ENCODE measurements at regions of chr2 and their contacts with region 1.

Region 1: DNA sequence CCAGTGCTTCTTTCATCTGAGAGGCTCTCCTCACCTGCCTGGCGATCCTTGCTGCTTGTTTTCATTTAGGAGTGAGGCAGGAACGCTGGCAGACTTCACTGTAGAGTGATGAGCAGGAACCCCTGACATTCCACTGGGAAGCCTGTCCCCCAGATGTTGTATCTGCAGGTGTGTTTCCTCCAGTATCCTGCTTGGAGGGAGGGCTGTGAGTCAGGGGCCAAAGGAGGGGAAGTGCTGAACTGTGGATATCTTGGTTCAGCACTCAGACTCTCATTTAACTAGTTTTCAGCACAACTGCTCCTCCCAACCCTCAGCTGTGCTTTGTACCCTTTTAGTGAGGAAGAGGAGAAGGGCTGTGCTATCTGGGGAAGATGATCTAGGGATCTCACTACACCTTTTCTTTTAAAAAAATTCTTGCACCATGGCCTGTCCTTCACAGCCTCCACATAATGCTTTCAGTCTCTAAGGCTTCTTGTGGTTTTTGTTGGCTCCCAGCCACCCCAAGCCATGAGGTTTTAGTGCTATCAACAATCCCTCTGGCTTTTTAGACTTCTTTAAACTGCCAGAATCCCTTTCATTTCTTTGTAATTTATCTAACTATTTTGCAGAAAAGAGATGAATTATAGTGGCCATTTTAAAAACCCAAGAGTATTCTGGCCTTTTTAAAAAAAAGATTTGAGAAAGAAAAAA is 11.2 kb downstream of the ANKAR start:
- DNase-seq: peak; percentile 47
- ATAC-seq: no peak
- H3K4me3 Mint-ChIP-seq: no peak overlapping the region
- H3K27ac Mint-ChIP-seq: no peak overlapping the region
- H3K4me1 Mint-ChIP-seq: peaks cover 33% of the 10 kb centered on the region
- H3K27me3 Mint-ChIP-seq: no peaks in the 10 kb centered on the region
- CTCF ChIP-seq: no peak

Region 2: DNA sequence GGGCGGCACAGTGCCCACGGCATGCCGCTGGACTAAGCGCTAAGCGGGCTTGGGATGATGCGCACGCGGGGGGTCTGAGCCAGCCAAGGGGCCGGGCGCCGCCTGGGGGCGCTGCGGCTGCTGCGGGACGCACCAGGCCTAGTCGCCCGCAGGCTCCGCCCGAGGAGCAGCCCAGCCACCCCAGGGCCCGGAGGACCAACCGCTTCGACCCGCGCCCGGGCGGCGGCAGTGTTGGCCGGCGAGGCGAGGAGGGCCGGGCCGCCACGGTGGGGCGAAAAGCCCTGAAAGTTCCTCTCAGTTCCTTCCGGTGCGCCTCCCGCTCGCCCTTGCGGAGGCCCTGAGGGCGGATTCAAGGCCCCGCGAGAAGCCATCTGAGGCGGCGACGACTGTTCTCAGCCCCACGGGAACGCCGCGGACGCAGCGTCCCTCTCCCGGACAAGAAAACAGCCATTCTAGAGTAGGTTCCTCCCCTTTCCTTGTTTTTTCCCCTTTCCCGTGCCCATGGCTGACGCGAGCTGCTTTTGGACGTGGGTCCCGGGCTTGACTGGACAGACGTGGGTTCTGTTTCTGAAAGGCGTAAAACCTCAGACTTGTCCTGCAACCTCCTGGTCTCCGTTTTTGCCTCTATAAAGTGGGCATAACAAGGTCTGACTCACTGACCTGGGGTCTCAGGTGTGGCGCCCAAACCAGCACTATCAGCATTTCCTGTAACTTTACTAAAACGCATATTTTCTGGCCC is 11.1 kb before region 1 on chr2 and contains the start of gene ANKAR:
- CTCF ChIA-PET with region 1: interaction called, 35 read pairs
- POLR2A ChIA-PET with region 1: interaction called, 16 read pairs
- intact Hi-C with region 1: no loop called
- DNase-seq: peak; percentile 82
- ATAC-seq: peak; percentile 93
- H3K4me3 Mint-ChIP-seq: peak within 1 kb of the TSS; percentile 89
- H3K27ac Mint-ChIP-seq: peak within 1 kb of the TSS; percentile 96
- H3K4me1 Mint-ChIP-seq: peaks cover 28% of the 10 kb centered on the region
- H3K27me3 Mint-ChIP-seq: no peaks in the 10 kb centered on the region
- CTCF ChIP-seq: peak; percentile 76
- total RNA-seq, gene ANKAR: 3.5 to 3.6 TPM

Measured in activated CD8-positive, alpha-beta T cell treated with anti-CD3 and anti-CD28 coated beads for 36 hours (primary cell).